ENCODE measurements at regions of chr2 and their contacts with region 1.

Region 1: GRCh38 chr2:176126929-176127773 is 2.4 kb upstream of the HOXD8 start:
- DNase-seq: peak; percentile 69
- ATAC-seq: no peak
- H3K4me3 Mint-ChIP-seq: no peak overlapping the region
- H3K27ac Mint-ChIP-seq: no peak overlapping the region
- H3K4me1 Mint-ChIP-seq: peaks cover 23% of the 10 kb centered on the region
- H3K27me3 Mint-ChIP-seq: peaks cover 98% of the 10 kb centered on the region
- CTCF ChIP-seq: peak; percentile 82

Region 2: DNA sequence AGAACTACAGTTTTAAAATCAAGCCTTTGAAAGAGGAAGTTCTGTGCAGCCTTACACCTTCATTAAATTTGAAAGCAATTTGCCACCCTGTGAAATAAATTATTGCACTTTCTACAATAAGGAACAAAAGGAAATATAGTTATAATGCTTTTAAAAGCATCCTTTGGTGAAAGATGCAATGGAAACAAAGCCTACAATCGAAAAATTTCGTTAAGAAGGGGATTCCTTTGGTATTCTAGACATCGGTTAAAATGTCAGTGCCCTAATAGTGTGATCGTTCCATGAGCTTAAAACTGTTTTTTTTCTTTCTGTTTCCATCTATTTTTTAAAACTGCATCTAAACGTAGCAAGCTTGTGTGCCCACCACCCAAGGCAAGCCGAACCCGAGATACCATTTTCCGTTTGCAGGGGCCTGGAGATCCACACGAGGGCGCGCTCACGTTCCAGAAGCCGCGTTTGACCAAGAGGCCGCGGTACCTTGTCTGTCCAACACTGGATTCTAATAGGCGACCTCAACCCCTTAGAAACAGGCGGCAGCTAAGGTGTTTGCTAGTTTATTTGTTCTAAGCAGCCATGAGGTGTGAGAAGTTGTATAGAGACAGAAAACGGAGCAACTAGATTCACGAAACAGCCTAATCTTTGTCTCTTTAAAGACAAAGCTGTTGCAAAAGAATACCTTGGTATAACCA is 16.0 kb before region 1 on chr2:
- CTCF ChIA-PET with region 1: interaction called, 15 read pairs
- POLR2A ChIA-PET with region 1: no interaction called
- DNase-seq: peak; percentile 80
- ATAC-seq: peak; percentile 12
- H3K4me3 Mint-ChIP-seq: no peak overlapping the region
- H3K27ac Mint-ChIP-seq: no peak overlapping the region
- H3K4me1 Mint-ChIP-seq: peaks cover 31% of the 10 kb centered on the region
- H3K27me3 Mint-ChIP-seq: peaks cover 98% of the 10 kb centered on the region
- CTCF ChIP-seq: peak; percentile 40; the same call in 1 of the 2 replicates

Measured in WTC11 (cell line).